ENCODE measurements at regions of chr17 and their contacts with region 1.

Region 1: GRCh38 chr17:40203131-40203530 is 16.0 kb upstream of the WIPF2 start:
- DNase-seq: no peak
- H3K4me3 Mint-ChIP-seq: no peak overlapping the region
- H3K27ac Mint-ChIP-seq: no peak overlapping the region
- H3K4me1 Mint-ChIP-seq: no peaks in the 10 kb centered on the region
- H3K27me3 Mint-ChIP-seq: peaks cover 2% of the 10 kb centered on the region

Region 2: DNA sequence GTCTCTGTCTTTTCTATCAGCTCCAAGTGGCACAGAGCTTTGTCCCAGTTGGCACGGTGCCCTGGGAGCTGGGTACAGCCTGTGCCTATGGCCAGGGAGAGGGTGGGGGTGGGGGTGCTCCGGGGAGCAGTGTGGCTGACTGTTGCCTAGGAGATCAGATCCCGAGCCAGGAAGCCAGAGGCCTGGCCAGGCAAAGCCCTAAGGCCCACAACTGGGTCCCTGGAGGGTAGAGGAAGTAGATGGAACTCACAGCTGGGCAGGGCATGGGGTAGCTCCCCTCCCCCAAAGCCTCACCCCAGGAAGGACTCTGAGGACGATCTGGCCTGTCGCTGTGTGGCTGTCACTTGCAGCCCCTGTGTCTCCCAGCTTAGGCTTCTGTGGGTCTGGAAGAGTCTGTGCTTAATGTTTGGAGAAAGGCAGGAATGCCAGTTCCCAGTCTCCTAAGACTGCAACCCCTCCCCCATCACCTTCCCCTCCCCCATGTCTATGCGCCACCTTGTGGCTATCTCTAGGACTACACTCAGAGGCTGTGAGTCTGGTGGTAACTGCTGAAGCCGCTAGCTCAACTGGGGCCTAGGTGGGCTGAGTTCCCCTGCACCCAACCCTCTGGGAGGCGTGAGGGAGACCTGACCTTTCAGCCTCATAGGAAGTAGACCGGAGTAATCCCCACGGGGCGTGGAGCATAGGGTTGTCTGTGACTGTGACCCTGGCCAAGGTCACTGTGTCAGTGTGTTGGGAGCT is 127.8 kb before region 1 on chr17:
- CTCF ChIA-PET with region 1: no interaction called
- POLR2A ChIA-PET with region 1: no interaction called
- intact Hi-C with region 1: no loop called
- DNase-seq: peak; percentile 80
- H3K4me3 Mint-ChIP-seq: no peak overlapping the region
- H3K27ac Mint-ChIP-seq: peak overlapping the region; percentile 34
- H3K4me1 Mint-ChIP-seq: peaks cover 19% of the 10 kb centered on the region
- H3K27me3 Mint-ChIP-seq: no peaks in the 10 kb centered on the region

Region 3: GRCh38 chr17:40098846-40099618 is 104.1 kb before region 1 on chr17:
- CTCF ChIA-PET with region 1: no interaction called
- POLR2A ChIA-PET with region 1: no interaction called
- intact Hi-C with region 1: no loop called
- DNase-seq: peak; percentile 99
- H3K4me3 Mint-ChIP-seq: peak overlapping the region; percentile 88
- H3K27ac Mint-ChIP-seq: peak overlapping the region; percentile 91
- H3K4me1 Mint-ChIP-seq: peaks cover 85% of the 10 kb centered on the region
- H3K27me3 Mint-ChIP-seq: no peaks in the 10 kb centered on the region

Region 4: DNA sequence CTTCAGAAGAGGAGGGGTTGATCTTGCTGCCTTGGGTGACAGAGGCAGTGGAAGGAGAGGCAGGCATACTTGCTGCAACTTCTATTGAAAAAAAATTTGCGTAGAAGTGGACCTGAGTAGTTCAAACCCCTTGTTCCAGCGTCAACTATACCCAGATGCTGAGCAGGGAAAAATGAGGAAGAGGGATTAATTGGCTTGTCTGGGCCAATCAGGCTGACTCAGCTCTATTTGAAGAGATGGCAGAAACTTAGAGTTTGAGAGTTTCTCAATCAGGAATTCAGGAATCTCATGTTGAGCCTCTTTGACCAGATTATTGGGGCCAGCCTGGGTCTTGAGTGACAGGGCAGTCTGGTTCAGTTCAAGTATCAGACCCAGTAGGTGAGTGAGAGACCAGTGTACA is 45.2 kb before region 1 on chr17:
- CTCF ChIA-PET with region 1: no interaction called
- POLR2A ChIA-PET with region 1: no interaction called
- intact Hi-C with region 1: no loop called
- DNase-seq: no peak
- H3K4me3 Mint-ChIP-seq: no peak overlapping the region
- H3K27ac Mint-ChIP-seq: peak overlapping the region; percentile 50
- H3K4me1 Mint-ChIP-seq: peaks cover 44% of the 10 kb centered on the region
- H3K27me3 Mint-ChIP-seq: no peaks in the 10 kb centered on the region

Region 5: GRCh38 chr17:40219073-40219860 is 16.1 kb after region 1 on chr17 and contains the start of gene WIPF2:
- CTCF ChIA-PET with region 1: interaction called, 35 read pairs
- POLR2A ChIA-PET with region 1: interaction called, 6 read pairs
- intact Hi-C with region 1: no loop called
- DNase-seq: peak; percentile 99
- H3K4me3 Mint-ChIP-seq: peak within 1 kb of the TSS; percentile 86
- H3K27ac Mint-ChIP-seq: peak within 1 kb of the TSS; percentile 92
- H3K4me1 Mint-ChIP-seq: peaks cover 27% of the 10 kb centered on the region
- H3K27me3 Mint-ChIP-seq: no peaks in the 10 kb centered on the region
- total RNA-seq, gene WIPF2: 19.0 to 20.6 TPM

Region 6: DNA sequence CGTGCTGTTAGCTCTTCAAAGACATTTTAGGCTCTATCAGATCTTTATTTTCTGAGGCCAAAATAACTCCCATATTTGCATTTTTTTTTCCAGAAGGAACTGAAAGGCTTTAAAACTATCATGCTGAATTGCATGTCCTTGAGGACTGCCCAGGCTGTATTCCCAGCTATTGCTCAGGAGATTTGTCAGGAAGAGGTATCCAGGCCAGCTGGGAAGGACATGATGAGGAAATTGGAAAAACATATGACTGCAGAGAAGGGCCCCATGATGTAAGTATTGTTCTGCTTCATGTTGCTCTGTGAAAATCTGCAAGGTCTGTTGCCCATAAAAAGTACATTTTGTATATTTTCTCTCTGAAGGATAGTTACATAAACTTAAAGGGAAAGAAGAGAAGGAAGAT is 90.2 kb after region 1 on chr17:
- CTCF ChIA-PET with region 1: interaction called, 25 read pairs
- POLR2A ChIA-PET with region 1: no interaction called
- intact Hi-C with region 1: loop called (anchors 1 kb)
- DNase-seq: no peak
- H3K4me3 Mint-ChIP-seq: no peak overlapping the region
- H3K27ac Mint-ChIP-seq: no peak overlapping the region
- H3K4me1 Mint-ChIP-seq: peaks cover 36% of the 10 kb centered on the region
- H3K27me3 Mint-ChIP-seq: no peaks in the 10 kb centered on the region